IMR-90 (cell line): ENCODE measurements at regions of chr13 and their contacts with region 1.

Region 1: GRCh38 chr13:94612050-94612449 is 10.4 kb downstream of the GPR180 start:
- DNase-seq: no peak
- ATAC-seq: no peak
- H3K4me3 ChIP-seq: no peak overlapping the region
- H3K27ac ChIP-seq: no peak overlapping the region
- H3K4me1 ChIP-seq: no peaks in the 10 kb centered on the region
- H3K27me3 ChIP-seq: no peaks in the 10 kb centered on the region
- CTCF ChIP-seq: no peak
- POLR2A ChIP-seq: no peak
- RAD21 ChIP-seq: no peak

Region 2: DNA sequence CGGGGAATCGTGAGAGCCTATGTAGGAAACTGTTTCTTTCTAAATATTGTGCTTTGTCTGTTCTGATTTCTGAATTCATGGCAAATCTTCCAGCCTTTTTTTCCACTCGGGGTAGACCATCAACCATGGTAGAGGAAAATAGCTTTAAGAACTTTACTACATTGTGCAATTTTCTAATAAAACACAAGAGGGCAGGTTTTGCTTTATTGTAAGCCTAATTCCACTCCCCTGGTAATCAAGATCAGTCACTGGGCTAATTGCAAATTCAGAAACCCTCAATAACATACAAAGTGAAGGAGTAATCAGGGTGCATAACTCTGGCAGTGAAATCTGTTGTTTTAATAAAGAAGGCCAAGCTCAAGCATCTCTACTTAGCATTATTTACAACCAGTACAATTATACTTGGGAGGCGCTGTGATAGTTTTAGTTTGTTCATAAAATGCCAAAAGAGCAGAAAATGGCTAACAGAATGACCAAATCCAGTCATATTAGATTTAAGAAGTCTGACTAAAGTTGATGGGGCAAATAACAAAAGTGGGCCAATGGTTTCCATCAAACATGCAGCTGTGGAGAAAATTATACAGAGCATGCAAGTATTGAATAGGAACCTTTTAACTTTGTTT is 176.3 kb before region 1 on chr13:
- CTCF ChIA-PET with region 1: interaction called, 8 read pairs
- POLR2A ChIA-PET with region 1: interaction called, 3 read pairs
- dilution Hi-C with region 1: no loop called
- in situ Hi-C with region 1: loop called (anchors 5 kb)
- intact Hi-C with region 1: loop called (anchors 1 kb)
- DNase-seq: peak; percentile 58
- ATAC-seq: peak; percentile 91
- H3K4me3 ChIP-seq: no peak overlapping the region
- H3K27ac ChIP-seq: no peak overlapping the region
- H3K4me1 ChIP-seq: no peaks in the 10 kb centered on the region
- H3K27me3 ChIP-seq: peaks cover 6% of the 10 kb centered on the region
- CTCF ChIP-seq: peak; percentile 63
- POLR2A ChIP-seq: no peak
- RAD21 ChIP-seq: peak; percentile 65